ENCODE measurements at regions of chr1 and their contacts with region 1.

Region 1: DNA sequence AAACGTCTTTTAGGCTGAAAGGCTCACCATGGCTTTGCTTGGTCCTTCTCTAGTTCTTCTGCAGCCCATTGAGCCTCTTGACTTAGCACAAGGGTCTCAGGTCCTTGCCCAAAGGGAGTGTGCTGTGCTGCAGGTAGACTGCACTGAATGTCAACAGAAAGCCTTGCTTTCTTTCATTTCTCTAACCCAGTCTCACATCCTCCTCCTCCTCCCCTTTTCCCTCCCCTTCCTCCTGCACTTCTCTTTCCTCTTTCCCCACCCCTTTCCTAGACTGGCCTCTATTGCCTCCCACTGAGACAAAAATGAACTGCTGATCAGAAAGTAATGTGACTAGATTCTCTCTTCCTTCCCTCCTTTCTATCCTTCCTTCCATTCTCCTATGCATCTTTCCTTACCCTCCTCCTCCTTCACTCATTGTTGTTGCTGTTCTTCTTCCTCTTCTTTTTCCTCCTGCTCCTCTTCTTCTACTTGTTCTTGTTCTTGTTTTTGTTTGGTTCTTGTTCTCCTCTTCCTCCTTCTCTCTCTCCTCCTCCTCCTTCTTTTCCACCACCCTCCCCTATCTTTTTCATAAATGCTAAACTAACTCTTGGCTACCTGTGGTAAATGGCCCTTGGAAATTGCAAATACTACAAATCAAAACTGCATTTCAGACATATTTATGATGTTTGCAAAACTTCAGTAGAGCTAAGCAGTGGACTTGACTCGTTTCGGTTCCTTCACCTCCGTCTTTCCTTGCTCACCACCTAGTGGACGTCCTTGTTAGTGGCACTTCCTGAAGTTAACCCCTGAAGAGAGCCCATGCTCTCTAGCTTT is at the start of gene SELL:
- DNase-seq: peak; percentile 61 to 91
- ATAC-seq: peak; percentile 89 to 93 (median 91)
- H3K4me3 ChIP-seq: peak within 1 kb of the TSS; percentile 55
- H3K4me3 Mint-ChIP-seq: peak within 1 kb of the TSS; percentile 77
- H3K27ac ChIP-seq: peak within 1 kb of the TSS; percentile 49
- H3K27ac Mint-ChIP-seq: peak within 1 kb of the TSS; percentile 27 to 90
- H3K4me1 ChIP-seq: peaks cover 4% of the 10 kb centered on the region
- H3K4me1 Mint-ChIP-seq: peaks cover 32 to 38% of the 10 kb centered on the region in 2 donors
- H3K27me3 ChIP-seq: no peaks in the 10 kb centered on the region
- H3K27me3 Mint-ChIP-seq: peaks cover 8 to 18% of the 10 kb centered on the region in 2 donors
- CTCF ChIP-seq: peak; percentile 93
- total RNA-seq, gene SELL: 149 to 190 (median 165) TPM

Region 2: DNA sequence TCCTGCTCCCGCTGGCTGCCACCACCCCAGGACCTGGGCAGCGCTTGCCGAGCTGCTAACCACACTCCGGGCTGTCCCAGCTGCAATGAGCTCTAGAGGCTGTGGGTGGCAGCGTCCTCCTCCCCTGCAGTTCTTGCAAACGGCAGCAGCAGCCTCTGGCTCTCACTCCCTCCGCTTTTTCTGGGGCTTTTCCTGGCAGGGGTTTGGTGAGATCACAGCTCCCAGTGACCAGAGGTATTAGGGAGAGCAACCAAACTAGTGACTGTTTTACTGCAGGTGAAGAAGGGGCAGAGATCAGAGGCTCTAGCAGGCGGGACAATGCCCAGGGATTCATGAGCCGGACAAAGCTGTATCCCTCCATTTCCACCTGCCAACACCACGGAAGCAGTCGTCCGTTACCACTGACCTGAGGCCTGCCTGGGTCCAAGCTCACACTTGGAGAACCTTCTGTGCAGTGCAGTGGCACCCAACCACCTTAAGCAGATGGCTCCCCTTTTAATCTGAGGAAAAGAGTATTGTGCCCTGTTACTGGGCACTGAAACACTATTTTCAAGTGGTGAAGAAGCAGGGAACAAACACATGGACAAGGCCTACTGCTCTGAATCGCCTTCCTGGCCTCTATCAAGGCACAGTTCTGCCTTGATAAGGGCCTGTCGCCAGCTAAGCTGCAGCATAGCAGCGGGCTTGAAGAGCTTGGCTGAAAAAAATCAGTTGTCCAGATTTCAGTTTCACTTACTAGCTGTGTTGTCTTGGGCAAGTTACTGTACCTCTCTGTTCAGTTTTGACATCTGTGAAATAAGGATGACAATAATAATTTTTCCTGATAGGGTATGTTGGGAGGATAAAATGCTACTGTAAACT is 125.0 kb before region 1 on chr1 and contains the start of gene F5:
- intact Hi-C with region 1: loop called (anchors 1 kb)
- DNase-seq: peak; percentile 50 to 85
- ATAC-seq: peak; percentile 97 to 100 (median 99)
- H3K4me3 ChIP-seq: no peak within 1 kb of the TSS
- H3K4me3 Mint-ChIP-seq: peak within 1 kb of the TSS; percentile 51
- H3K27ac ChIP-seq: no peak within 1 kb of the TSS
- H3K27ac Mint-ChIP-seq: peak within 1 kb of the TSS in 1 of 2 donors; percentile 37
- H3K4me1 ChIP-seq: peaks cover 12% of the 10 kb centered on the region
- H3K4me1 Mint-ChIP-seq: peaks cover 7 to 13% of the 10 kb centered on the region in 2 donors
- H3K27me3 ChIP-seq: peaks cover 14% of the 10 kb centered on the region
- H3K27me3 Mint-ChIP-seq: peaks cover 16 to 28% of the 10 kb centered on the region in 2 donors
- CTCF ChIP-seq: peak; percentile 58
- total RNA-seq, gene F5: 0.02 to 1.7 (median 0.45) TPM

Region 3: DNA sequence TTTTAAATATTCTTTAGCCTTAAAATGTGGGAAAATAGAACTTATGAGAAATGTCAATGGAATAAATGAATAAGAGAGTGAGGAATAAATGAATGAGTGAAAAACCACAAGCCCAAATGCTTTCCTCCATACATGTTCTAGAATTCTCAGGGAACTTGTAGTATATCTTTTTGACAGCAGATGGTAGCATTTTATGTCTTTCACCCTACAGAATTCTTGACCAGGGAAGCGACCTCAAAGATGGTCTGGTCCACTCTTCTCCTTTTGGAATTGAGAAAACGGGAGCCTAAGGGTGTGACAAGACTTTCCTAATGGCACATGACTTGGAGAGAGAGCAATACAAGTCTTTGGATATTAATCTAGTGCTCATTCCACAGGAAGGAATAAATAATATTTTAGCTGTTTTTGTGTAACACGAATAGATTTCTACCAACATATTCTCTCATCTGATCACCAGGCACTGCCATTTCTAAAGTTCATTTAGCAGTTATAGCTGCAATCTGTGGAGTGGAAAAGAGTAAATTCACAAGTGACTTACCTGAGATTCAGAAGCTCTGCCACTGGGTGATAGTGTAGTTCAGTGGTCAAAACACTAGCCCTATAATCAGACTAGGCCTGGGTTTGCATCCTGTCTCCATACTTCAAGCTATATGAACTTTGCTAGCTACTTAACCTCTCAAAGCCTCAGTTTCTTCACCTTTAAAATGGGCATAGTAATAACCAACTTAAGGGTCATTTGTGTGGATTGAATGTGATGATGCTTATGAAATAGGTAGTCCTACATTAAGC is 110.4 kb before region 1 on chr1:
- intact Hi-C with region 1: loop called (anchors 1 kb)
- DNase-seq: peak in 1 of 2 donors; percentile 63
- ATAC-seq: peak in 2 of 3 donors; percentile 28 to 49
- H3K4me3 ChIP-seq: no peak overlapping the region
- H3K4me3 Mint-ChIP-seq: no peak overlapping the region
- H3K27ac ChIP-seq: no peak overlapping the region
- H3K27ac Mint-ChIP-seq: peak overlapping the region; percentile 55 to 77
- H3K4me1 ChIP-seq: peaks cover 24% of the 10 kb centered on the region
- H3K4me1 Mint-ChIP-seq: peaks cover 53 to 55% of the 10 kb centered on the region in 2 donors
- H3K27me3 ChIP-seq: no peaks in the 10 kb centered on the region
- H3K27me3 Mint-ChIP-seq: peaks cover 0 to 12% of the 10 kb centered on the region in 2 donors
- CTCF ChIP-seq: peak; percentile 66

Region 4: GRCh38 chr1:169683661-169684060 is 28.0 kb before region 1 on chr1:
- intact Hi-C with region 1: no loop called
- DNase-seq: no peak
- ATAC-seq: no peak
- H3K4me3 ChIP-seq: no peak overlapping the region
- H3K4me3 Mint-ChIP-seq: no peak overlapping the region
- H3K27ac ChIP-seq: no peak overlapping the region
- H3K27ac Mint-ChIP-seq: no peak overlapping the region
- H3K4me1 ChIP-seq: peaks cover 19% of the 10 kb centered on the region
- H3K4me1 Mint-ChIP-seq: peaks cover 24 to 33% of the 10 kb centered on the region in 2 donors
- H3K27me3 ChIP-seq: no peaks in the 10 kb centered on the region
- H3K27me3 Mint-ChIP-seq: no peaks in the 10 kb centered on the region
- CTCF ChIP-seq: no peak

Region 5: GRCh38 chr1:169694304-169695075 is 17.2 kb before region 1 on chr1:
- intact Hi-C with region 1: loop called (anchors 2 kb)
- DNase-seq: peak; percentile 28 to 83
- ATAC-seq: peak; percentile 60 to 80 (median 77)
- H3K4me3 ChIP-seq: no peak overlapping the region
- H3K4me3 Mint-ChIP-seq: peak overlapping the region; percentile 59
- H3K27ac ChIP-seq: peak overlapping the region; percentile 74
- H3K27ac Mint-ChIP-seq: peak overlapping the region; percentile 80 to 89
- H3K4me1 ChIP-seq: peaks cover 60% of the 10 kb centered on the region
- H3K4me1 Mint-ChIP-seq: peaks cover 82 to 88% of the 10 kb centered on the region in 2 donors
- H3K27me3 ChIP-seq: no peaks in the 10 kb centered on the region
- H3K27me3 Mint-ChIP-seq: no peaks in the 10 kb centered on the region
- CTCF ChIP-seq: peak; percentile 20

Region 6: DNA sequence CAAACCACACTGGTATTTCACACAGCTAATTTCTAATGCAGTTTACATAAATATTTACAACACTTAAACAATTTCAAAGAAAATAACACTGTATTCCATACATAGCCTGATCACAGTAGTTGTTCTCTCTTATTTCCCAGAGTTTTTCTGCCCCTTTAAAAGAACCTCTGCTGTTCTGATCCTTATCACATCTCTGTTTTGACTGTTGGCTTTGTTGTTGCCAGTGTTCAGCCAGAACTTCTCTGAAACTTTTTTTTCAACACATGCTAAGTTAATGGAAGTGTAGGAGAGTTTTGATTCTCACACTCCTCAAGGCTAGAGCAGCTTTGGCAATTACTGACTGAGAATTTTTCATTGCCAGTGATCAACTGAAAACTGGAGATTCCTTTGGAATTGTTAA is 11.1 kb after region 1 on chr1:
- intact Hi-C with region 1: no loop called
- DNase-seq: no peak
- ATAC-seq: no peak
- H3K4me3 ChIP-seq: no peak overlapping the region
- H3K4me3 Mint-ChIP-seq: no peak overlapping the region
- H3K27ac ChIP-seq: no peak overlapping the region
- H3K27ac Mint-ChIP-seq: no peak overlapping the region
- H3K4me1 ChIP-seq: no peaks in the 10 kb centered on the region
- H3K4me1 Mint-ChIP-seq: no peaks in the 10 kb centered on the region
- H3K27me3 ChIP-seq: no peaks in the 10 kb centered on the region
- H3K27me3 Mint-ChIP-seq: peaks cover 5 to 17% of the 10 kb centered on the region in 2 donors
- CTCF ChIP-seq: no peak

Region 7: DNA sequence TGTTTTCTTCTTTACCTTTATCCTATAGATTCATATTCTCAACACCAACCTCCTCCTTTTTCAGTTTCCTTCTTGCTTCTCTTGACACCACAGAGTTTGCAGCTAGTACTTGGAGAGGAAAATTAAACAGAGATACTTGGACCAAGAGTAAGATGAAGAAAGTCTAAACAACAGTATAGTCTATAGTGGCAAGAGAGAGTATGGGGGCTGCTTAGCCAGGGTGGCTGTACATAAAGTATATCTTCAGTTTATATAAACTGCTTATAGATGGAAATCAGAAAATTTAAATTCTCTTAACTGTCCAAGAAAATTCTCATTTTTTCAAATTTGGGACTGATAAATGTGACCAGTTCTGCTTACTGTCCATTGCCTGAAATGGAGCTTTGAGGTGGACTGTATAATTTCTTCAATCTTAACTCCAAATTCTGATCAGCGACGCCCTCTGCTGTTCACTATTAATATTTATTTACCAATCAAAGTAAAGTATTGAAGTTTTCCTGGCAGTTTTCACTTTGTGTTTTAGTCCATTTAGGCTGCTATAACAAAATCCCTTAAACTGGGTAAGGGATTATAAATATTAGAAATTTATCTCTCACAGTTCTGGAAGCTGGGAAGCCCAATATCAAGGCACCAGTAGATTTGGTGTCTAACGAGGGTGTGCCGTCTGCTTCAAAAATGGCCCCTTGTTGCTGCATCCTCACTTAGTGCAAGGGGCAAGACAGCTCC is 97.9 kb after region 1 on chr1:
- intact Hi-C with region 1: loop called (anchors 10 kb)
- DNase-seq: peak in 1 of 2 donors; percentile 67
- ATAC-seq: peak in 2 of 3 donors; percentile 48 to 50
- H3K4me3 ChIP-seq: no peak overlapping the region
- H3K4me3 Mint-ChIP-seq: no peak overlapping the region
- H3K27ac ChIP-seq: no peak overlapping the region
- H3K27ac Mint-ChIP-seq: no peak overlapping the region
- H3K4me1 ChIP-seq: no peaks in the 10 kb centered on the region
- H3K4me1 Mint-ChIP-seq: peaks cover 4 to 9% of the 10 kb centered on the region in 2 donors
- H3K27me3 ChIP-seq: no peaks in the 10 kb centered on the region
- H3K27me3 Mint-ChIP-seq: no peaks in the 10 kb centered on the region
- CTCF ChIP-seq: peak; percentile 78

Region 8: DNA sequence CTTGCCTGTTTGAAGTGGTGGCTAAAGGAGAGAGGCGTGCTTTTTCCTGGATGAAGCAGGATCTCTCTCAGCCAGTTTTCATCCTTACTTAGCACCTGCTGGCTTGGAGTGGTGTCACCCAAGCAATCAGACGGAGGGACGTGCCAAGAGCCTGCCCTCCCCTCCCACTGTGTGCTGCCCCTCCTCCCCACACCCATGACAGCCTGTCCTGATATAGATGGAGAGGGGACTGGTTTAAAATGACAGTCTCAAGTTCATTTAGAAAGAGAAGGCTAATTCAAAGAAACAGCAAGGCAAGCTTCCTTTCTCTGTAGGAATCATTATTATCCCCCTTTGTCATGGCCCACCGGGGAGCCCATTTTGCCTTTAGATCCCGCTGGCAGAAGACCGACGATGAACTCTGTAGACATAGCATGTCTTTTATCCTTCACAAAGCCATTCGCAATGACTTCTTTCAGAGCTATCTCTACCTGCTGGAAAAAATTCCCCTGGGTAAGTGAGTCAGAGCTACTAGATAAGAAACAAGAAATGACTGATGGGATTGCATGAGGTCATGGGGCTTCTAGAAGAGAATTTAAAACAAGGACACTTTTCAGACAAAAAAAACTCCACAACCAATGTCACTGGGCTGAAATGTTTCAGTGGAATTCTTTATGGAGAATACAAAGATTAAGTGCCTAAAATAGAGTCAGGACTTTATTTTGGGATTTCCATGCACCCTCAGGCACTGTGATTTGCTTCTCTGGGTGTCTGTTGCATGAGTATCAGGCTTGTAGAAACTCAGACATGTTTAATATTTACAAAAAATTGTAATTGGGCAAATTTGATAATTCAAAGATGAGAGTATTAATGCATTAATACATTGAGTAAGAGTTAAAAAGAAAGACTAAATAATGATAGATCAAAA is 434.3 kb after region 1 on chr1 and contains the start of gene NTMT2:
- intact Hi-C with region 1: no loop called
- DNase-seq: no peak
- ATAC-seq: no peak
- H3K4me3 ChIP-seq: no peak within 1 kb of the TSS
- H3K4me3 Mint-ChIP-seq: no peak within 1 kb of the TSS
- H3K27ac ChIP-seq: no peak within 1 kb of the TSS
- H3K27ac Mint-ChIP-seq: no peak within 1 kb of the TSS
- H3K4me1 ChIP-seq: no peaks in the 10 kb centered on the region
- H3K4me1 Mint-ChIP-seq: no peaks in the 10 kb centered on the region
- H3K27me3 ChIP-seq: no peaks in the 10 kb centered on the region
- H3K27me3 Mint-ChIP-seq: peaks cover 20 to 54% of the 10 kb centered on the region in 2 donors
- CTCF ChIP-seq: no peak
- total RNA-seq, gene NTMT2: not detected

Measured in natural killer cell (primary cell).